GM10248 (cell line): ENCODE measurements at regions of chr6 and their contacts with region 1.

Region 1: DNA sequence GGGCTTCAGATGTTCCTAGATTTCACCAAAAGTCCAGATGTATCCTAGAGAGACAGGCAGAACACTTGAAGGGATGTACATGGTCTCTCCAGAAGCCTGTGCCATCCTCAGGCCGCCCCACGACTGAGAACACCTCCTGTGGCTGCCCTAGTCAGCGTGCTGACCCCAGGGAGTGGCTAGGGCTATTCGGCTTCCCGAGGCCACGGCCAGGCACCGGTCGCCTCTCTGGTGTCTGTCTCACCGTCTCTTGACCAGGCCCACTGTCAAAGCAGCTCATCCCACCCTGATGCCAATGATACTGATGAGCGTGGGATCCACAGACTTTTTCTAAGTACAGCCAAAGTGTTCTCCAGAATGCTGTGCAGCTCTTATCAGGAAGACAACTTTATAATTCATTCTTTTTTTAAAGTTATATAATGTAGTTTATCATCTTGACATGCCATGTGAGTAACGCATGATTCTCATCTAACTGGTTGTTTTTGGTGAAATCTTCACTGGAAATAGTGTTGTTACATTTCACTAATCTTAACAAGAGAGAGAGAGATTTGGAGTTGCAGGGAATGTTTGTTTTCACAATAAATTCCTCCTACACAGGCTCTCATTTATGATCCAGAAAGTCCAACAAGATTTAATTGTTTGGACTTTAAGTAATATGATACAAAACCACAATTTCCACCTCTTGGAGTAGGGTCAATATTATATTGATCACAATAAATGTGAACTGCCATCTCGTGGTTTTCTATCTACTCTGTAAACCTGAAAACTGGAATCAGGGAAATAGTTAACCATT is 41.7 kb upstream of the KLHL31 start:
- DNase-seq: no peak
- CTCF ChIP-seq: no peak

Region 2: DNA sequence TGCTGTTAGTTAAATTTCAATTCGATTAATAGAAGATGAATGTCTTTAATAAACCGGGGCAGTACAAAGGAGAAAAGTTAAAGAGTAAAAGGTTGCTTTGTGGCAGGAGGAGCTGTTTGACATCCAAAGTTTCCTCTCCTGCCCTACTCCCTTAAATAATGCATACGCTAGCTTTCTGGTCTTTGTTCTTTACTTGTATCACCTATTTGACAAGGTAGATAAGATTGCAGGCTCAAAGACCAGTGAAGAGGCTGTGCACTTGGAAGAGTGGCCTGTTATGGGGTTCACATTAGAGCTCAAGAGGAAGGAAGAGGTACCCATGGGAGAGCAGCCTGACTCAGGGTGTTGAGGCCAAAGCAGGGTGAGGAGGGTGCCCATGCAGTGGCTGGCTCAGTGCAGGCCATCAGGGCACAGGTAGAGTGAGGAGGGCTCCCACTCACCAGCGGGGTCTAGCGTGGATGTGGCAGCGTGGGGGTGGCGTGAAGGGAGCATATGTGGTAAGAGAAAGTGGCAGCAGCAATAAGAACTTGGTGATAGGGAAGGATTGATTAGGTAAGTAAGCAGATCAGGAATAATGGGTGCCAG is 12.4 kb before region 1 on chr6:
- CTCF ChIA-PET with region 1: interaction called, 10 read pairs
- POLR2A ChIA-PET with region 1: no interaction called
- DNase-seq: no peak
- CTCF ChIP-seq: no peak

Region 3: GRCh38 chr6:53735896-53736295 is 28.6 kb after region 1 on chr6:
- CTCF ChIA-PET with region 1: no interaction called
- POLR2A ChIA-PET with region 1: no interaction called
- DNase-seq: no peak
- CTCF ChIP-seq: no peak